ENCODE measurements at regions of chr18 and their contacts with region 1.

Region 1: DNA sequence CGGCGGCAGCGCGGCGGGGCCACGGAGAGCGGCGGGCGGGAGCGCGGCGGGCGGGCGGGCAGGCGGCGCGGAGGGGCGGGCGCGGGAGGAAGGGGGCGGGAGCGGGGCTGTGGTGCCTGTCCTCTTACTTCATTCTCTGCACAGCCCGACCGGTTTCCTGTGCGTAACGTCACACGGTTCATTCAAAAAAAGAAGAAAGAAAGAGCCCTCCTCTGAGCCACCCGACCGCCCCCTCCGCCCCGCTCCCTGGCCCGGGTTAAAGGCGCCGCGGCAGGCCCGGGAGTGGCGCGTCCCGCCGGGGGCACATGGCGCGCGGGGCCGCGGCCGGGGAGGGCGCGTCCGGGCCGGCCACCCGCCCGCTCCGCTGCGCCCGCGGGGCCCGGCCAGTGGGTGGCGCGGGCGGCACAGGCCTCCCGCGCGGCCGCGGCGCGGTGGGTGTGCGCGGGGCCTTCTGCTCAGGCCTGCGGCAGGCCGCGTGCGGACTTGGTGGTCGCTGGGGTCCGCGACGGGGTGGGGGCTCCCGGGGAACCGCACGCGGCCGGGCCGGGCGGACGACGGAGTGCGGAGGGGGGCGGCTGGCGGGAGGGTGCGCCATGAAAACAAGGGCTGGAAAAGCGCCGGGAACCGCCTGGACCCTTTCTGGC is 599 bp upstream of the BCL2 start:
- DNase-seq: peak; percentile 88 to 95 (median 91)
- H3K4me3 ChIP-seq: peak overlapping the region in 1 of 2 donors; percentile 48
- H3K4me3 Mint-ChIP-seq: peak overlapping the region; percentile 86 to 99 (median 90)
- H3K27ac ChIP-seq: peak overlapping the region; percentile 58
- H3K27ac Mint-ChIP-seq: peak overlapping the region; percentile 91 to 97 (median 95)
- H3K4me1 ChIP-seq: peaks cover 32% of the 10 kb centered on the region
- H3K4me1 Mint-ChIP-seq: peaks cover 18 to 65% (median 28%) of the 10 kb centered on the region in 4 donors
- H3K27me3 ChIP-seq: no peaks in the 10 kb centered on the region
- H3K27me3 Mint-ChIP-seq: no peaks in the 10 kb centered on the region

Region 2: GRCh38 chr18:62537946-62538345 is 782.2 kb before region 1 on chr18:
- CTCF ChIA-PET with region 1: no interaction called
- POLR2A ChIA-PET with region 1: no interaction called
- intact Hi-C with region 1: no loop called
- DNase-seq: no peak
- H3K4me3 ChIP-seq: no peak overlapping the region
- H3K4me3 Mint-ChIP-seq: no peak overlapping the region
- H3K27ac ChIP-seq: no peak overlapping the region
- H3K27ac Mint-ChIP-seq: no peak overlapping the region
- H3K4me1 ChIP-seq: peaks cover 44% of the 10 kb centered on the region
- H3K4me1 Mint-ChIP-seq: peaks cover 32 to 63% (median 46%) of the 10 kb centered on the region in 4 donors
- H3K27me3 ChIP-seq: no peaks in the 10 kb centered on the region
- H3K27me3 Mint-ChIP-seq: no peaks in the 10 kb centered on the region

Region 3: GRCh38 chr18:63025251-63026090 is 294.7 kb before region 1 on chr18:
- CTCF ChIA-PET with region 1: interaction called, 46 read pairs
- POLR2A ChIA-PET with region 1: interaction called, 3 read pairs
- intact Hi-C with region 1: no loop called
- DNase-seq: no peak
- H3K4me3 ChIP-seq: no peak overlapping the region
- H3K4me3 Mint-ChIP-seq: no peak overlapping the region
- H3K27ac ChIP-seq: no peak overlapping the region
- H3K27ac Mint-ChIP-seq: no peak overlapping the region
- H3K4me1 ChIP-seq: no peaks in the 10 kb centered on the region
- H3K4me1 Mint-ChIP-seq: no peaks in the 10 kb centered on the region
- H3K27me3 ChIP-seq: no peaks in the 10 kb centered on the region
- H3K27me3 Mint-ChIP-seq: peaks cover 0 to 3% of the 10 kb centered on the region in 2 donors

Region 4: DNA sequence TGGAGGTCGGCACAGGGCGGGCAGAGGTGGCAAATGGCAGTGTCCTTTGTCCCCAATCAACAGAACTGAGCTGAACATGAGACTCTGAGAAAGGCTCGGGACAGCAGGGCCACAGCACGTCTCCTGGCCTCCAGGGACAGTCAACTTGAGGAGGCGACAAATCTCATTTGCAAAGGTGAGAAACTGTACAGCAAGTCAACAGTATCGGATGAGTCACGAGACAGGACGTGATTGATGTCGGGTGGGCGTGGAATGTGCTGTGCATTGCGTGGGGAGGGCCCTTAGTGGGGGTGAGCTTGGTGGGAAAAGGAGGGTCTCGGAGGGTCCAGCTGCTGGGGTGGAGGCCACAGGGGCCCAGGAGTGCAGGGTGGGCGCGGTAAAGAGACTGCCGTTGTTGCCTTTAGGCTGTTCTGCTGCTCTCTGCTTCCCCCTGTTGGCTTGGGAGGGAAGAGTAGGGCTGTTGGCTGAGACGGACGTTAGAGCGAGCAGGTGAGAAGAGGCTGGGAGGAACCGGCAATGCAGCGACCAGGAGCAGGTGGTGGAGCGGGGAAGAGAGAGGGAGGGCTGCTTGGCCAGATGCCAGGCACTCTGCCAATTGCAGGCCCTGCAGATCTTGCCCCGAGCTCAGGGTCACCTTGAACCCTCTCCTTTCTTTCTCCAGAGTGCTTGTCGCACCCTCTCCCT is 164.9 kb before region 1 on chr18:
- CTCF ChIA-PET with region 1: interaction called, 139 read pairs
- POLR2A ChIA-PET with region 1: interaction called, 195 read pairs
- intact Hi-C with region 1: loop called (anchors 1 kb)
- DNase-seq: peak; percentile 79 to 92 (median 83)
- H3K4me3 ChIP-seq: peak overlapping the region; percentile 61 to 66
- H3K4me3 Mint-ChIP-seq: peak overlapping the region; percentile 83 to 93 (median 90)
- H3K27ac ChIP-seq: peak overlapping the region; percentile 97
- H3K27ac Mint-ChIP-seq: peak overlapping the region; percentile 93 to 100 (median 99)
- H3K4me1 ChIP-seq: peaks cover 100% of the 10 kb centered on the region
- H3K4me1 Mint-ChIP-seq: peaks cover 83 to 100% (median 93%) of the 10 kb centered on the region in 4 donors
- H3K27me3 ChIP-seq: no peaks in the 10 kb centered on the region
- H3K27me3 Mint-ChIP-seq: no peaks in the 10 kb centered on the region

Region 5: DNA sequence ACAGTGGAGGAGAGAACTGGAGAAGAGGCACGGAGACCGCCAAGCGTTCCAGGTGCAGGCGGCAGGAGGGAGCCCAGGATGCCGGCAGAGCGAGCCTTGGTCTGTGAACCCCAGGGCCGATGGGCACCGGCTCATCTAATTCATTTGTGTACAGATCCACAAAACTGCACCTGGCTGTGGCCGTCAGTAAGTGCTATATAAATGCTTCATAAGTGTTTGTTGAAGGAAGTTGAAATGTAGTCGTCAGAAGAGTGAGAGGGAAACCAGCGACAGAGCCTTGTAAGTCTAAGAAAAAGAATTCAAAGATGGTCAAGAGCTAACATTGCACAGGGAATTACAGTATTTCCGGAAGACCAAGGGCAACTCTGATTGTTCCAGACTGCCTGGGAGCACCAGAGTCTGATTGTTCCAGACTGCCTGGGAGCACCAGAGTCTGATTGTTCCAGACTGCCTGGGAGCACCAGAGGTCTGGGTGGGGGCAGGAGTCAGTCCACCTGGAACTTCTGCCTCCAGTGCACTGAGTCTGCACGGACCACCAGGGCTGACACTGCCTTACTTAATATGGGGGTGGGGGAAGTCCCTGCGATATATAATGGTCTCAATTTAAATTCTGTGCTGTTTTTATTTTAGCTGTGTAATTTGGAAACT is 112.9 kb before region 1 on chr18:
- CTCF ChIA-PET with region 1: interaction called, 22 read pairs
- POLR2A ChIA-PET with region 1: interaction called, 29 read pairs
- intact Hi-C with region 1: no loop called
- DNase-seq: no peak
- H3K4me3 ChIP-seq: peak overlapping the region in 1 of 2 donors; percentile 7
- H3K4me3 Mint-ChIP-seq: peak overlapping the region; percentile 70 to 89 (median 84)
- H3K27ac ChIP-seq: peak overlapping the region; percentile 46
- H3K27ac Mint-ChIP-seq: peak overlapping the region; percentile 81 to 97 (median 89)
- H3K4me1 ChIP-seq: peaks cover 100% of the 10 kb centered on the region
- H3K4me1 Mint-ChIP-seq: peaks cover 79 to 97% (median 90%) of the 10 kb centered on the region in 4 donors
- H3K27me3 ChIP-seq: no peaks in the 10 kb centered on the region
- H3K27me3 Mint-ChIP-seq: no peaks in the 10 kb centered on the region

Region 6: DNA sequence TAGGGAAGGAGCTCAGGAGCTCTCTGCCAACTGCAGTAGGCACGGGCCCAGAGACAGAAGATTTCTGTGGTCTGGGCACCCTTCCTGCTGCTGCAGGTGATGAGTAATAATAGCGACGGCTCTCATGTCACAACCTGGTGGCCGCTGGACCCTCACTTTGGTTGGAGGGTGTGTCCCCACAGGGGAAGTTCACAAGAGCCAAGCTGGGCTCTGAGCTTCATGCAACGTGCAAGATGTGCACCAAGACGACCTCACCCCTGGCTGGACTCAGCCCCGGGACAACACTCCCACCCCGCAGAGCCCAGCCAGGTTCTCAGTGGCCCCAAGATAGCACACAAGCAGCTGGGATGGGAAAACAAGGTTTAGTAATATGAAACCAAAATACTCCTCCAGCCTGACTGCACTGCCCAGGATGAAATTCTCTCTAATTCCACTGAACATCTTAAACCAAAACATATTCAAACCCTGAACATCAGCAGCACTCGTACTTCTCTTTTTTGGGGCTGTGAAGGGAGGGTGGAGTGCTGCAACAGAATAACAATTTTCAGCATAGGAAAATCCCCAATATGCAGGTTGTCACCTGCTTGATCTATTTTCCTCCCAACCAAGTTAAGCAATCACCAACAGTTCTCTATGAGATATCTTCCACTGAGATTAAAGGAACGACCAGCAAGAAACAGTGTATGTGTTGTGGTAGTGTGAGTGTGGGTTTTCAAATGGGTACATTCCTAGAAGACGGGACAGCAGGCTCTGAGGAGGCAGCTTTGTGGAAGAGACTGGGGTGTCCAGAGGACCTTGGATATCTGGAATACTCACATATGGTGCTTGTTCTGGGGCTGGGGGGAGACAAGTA is 27.1 kb before region 1 on chr18:
- CTCF ChIA-PET with region 1: interaction called, 93 read pairs
- POLR2A ChIA-PET with region 1: interaction called, 137 read pairs
- intact Hi-C with region 1: loop called (anchors 1 kb)
- DNase-seq: peak in 1 of 5 donors; percentile 59
- H3K4me3 ChIP-seq: peak overlapping the region in 1 of 2 donors; percentile 20
- H3K4me3 Mint-ChIP-seq: peak overlapping the region in 5 of 8 donors; percentile 28 to 86 (median 76)
- H3K27ac ChIP-seq: peak overlapping the region; percentile 27
- H3K27ac Mint-ChIP-seq: peak overlapping the region in 6 of 7 donors; percentile 65 to 90 (median 84)
- H3K4me1 ChIP-seq: peaks cover 82% of the 10 kb centered on the region
- H3K4me1 Mint-ChIP-seq: peaks cover 11 to 56% (median 40%) of the 10 kb centered on the region in 4 donors
- H3K27me3 ChIP-seq: no peaks in the 10 kb centered on the region
- H3K27me3 Mint-ChIP-seq: no peaks in the 10 kb centered on the region

Region 7: DNA sequence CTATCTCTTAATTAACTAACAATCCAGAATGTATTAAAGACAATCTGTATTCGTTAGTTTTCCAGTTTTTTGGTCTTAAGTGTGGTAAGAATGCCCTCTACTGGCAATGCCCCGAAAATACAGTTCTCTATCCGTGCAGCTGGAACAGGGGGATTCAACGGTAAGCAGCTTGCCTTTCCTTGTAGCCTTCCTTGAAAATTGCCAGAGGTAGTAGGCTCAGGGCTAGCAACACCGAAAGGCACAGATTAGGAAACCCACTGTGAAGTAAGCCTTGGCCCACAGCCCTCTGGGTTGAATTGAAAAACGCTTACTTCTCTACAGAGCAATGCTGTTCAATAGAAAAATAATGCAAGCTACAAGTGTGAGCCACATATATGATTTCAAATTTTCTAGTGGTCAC is 119.2 kb after region 1 on chr18:
- CTCF ChIA-PET with region 1: interaction called, 20 read pairs
- POLR2A ChIA-PET with region 1: no interaction called
- intact Hi-C with region 1: loop called (anchors 1 kb)
- DNase-seq: peak in 4 of 5 donors; percentile 54 to 58 (median 56)
- H3K4me3 ChIP-seq: no peak overlapping the region
- H3K4me3 Mint-ChIP-seq: peak overlapping the region in 1 of 8 donors; percentile 32
- H3K27ac ChIP-seq: no peak overlapping the region
- H3K27ac Mint-ChIP-seq: no peak overlapping the region
- H3K4me1 ChIP-seq: no peaks in the 10 kb centered on the region
- H3K4me1 Mint-ChIP-seq: peaks cover 0 to 3% (median 2%) of the 10 kb centered on the region in 4 donors
- H3K27me3 ChIP-seq: peaks cover 3% of the 10 kb centered on the region
- H3K27me3 Mint-ChIP-seq: peaks cover 0 to 9% of the 10 kb centered on the region in 2 donors

Measured in CD4-positive, alpha-beta memory T cell (primary cell).